Activated CD4-positive, alpha-beta T cell treated with anti-CD3 and anti-CD28 coated beads for 36 hours (primary cell): ENCODE measurements at regions of chr10 and their contacts with region 1.

Region 1: DNA sequence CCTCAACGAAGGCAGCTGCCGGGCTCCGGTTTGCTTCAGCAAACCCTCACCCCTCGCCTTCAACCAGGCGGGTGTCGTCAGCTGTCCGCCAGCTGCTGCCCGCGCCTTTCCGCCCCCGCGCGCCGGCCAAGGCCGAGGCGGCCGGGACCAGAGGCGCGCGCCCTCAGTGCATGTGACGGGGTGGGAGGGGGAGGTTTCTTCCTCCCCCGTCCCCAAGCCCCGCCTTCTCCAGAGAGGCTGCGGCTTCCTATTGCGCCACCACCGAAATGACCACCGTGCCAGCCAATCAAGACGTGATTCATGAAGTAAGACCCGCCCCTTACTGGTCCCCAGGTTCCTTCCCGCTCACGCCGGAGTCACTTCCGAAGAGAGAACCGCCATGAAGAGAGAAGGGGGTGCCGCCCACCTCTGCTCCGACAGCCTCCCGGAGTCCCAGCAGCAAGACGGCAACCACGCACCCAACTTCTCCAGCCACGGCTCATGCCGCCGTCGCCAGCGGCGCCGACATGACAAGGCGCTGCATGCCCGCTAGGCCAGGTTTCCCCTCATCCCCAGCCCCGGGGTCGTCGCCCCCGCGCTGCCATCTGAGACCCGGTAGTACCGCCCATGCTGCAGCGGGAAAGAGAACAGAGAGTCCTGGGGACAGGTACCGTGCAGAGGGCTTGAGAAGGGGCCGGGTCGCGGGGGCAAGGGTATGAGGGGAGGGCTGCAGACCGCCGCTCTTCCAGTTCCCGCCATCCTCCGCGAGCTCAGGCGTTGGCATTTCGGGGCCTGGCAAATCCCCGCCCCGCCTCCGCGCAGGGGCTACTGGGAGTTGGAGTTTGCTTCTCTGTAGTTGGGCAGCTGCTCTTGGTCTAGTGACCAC is at the start of gene SLF2:
- DNase-seq: peak; percentile 96
- ATAC-seq: peak; percentile 95
- H3K4me3 Mint-ChIP-seq: peak within 1 kb of the TSS; percentile 97
- H3K27ac Mint-ChIP-seq: peak within 1 kb of the TSS; percentile 98
- H3K4me1 Mint-ChIP-seq: peaks cover 45% of the 10 kb centered on the region
- H3K27me3 Mint-ChIP-seq: no peaks in the 10 kb centered on the region
- total RNA-seq, gene SLF2: 30.9 to 34.3 TPM

Region 2: GRCh38 chr10:99430451-99431189 is 1482.2 kb before region 1 on chr10 and contains the start of gene GOT1:
- CTCF ChIA-PET with region 1: no interaction called
- POLR2A ChIA-PET with region 1: no interaction called
- intact Hi-C with region 1: loop called in 1 of 2 experiments (anchors 2 kb)
- DNase-seq: peak; percentile 97
- ATAC-seq: peak; percentile 96
- H3K4me3 Mint-ChIP-seq: peak within 1 kb of the TSS; percentile 94
- H3K27ac Mint-ChIP-seq: peak within 1 kb of the TSS; percentile 98
- H3K4me1 Mint-ChIP-seq: peaks cover 32% of the 10 kb centered on the region
- H3K27me3 Mint-ChIP-seq: no peaks in the 10 kb centered on the region
- total RNA-seq, gene GOT1: 51.7 to 83.5 TPM

Region 3: DNA sequence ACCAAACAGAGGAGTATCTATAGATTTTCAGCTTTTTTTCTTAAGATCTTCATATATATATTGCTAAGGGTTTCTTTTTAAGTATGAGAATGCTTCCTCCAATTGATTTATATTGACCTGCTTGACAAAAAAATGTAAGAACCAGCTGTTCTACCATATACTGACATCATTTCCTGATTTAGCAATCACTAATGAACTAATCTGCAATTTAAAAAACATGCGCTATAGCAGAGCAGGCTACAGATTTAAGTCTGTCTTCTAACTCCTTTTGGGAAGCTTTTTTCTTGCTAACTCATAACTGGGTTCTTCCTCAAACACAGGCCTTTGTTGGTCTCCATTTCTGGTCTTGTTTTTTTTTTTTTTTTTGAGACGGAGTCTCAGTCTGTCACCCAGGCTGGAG is 1097.2 kb before region 1 on chr10:
- CTCF ChIA-PET with region 1: no interaction called
- POLR2A ChIA-PET with region 1: no interaction called
- intact Hi-C with region 1: no loop called
- DNase-seq: no peak
- ATAC-seq: no peak
- H3K4me3 Mint-ChIP-seq: no peak overlapping the region
- H3K27ac Mint-ChIP-seq: no peak overlapping the region
- H3K4me1 Mint-ChIP-seq: no peaks in the 10 kb centered on the region
- H3K27me3 Mint-ChIP-seq: no peaks in the 10 kb centered on the region

Region 4: DNA sequence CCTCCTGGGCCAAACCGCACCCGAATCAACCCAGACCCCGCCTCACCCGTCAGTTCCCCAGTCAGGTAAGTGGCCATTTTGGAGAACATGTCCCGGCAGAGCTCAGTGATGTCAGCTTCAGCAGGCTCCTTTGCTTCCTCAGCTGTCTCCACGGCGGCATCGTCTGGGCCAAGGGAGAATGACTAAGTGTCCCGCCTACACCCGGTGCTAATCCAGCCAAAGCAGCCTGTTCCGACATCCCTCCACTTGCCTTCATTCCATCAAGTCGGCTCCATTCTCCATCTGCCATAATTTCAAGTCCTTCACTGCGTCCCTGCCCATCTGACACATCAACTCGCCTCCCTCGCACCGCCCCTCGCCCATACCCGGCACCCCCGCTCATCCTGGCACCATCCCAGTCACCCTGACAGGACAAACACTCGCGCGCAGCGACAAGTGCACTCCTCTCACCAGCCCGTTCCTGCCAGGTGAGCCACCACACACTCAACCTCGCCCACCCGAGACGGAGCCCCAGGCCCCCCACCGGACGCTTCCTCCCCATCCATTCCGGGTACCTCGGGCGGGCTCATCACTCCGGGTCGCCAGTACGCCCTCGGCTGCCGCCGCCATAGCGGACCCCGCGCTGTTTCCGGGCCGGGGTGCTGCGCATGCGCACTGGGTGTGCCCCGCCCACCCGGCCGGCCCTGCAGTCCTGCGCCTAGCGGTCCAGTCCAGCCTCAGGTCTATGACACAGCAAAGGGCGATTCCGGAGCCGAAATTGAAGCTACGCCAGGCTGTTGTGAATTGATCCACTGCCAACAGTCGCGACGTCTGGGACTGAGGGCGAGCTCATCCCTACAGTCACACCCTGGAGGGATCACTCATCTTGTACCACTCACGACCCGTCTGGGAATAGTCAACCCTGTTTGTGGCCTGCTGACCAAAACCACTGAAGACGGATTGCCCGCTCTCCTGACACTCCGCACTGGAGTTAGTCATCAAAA is 626.5 kb before region 1 on chr10 and contains the start of gene BLOC1S2:
- CTCF ChIA-PET with region 1: no interaction called
- POLR2A ChIA-PET with region 1: no interaction called
- intact Hi-C with region 1: loop called in 1 of 2 experiments (anchors 1 kb)
- DNase-seq: peak; percentile 91
- ATAC-seq: peak; percentile 89
- H3K4me3 Mint-ChIP-seq: peak within 1 kb of the TSS; percentile 100
- H3K27ac Mint-ChIP-seq: peak within 1 kb of the TSS; percentile 100
- H3K4me1 Mint-ChIP-seq: peaks cover 24% of the 10 kb centered on the region
- H3K27me3 Mint-ChIP-seq: no peaks in the 10 kb centered on the region
- total RNA-seq, gene BLOC1S2: 45.0 to 45.7 TPM

Region 5: GRCh38 chr10:100836891-100837290 is 75.9 kb before region 1 on chr10:
- CTCF ChIA-PET with region 1: no interaction called
- POLR2A ChIA-PET with region 1: no interaction called
- intact Hi-C with region 1: no loop called
- DNase-seq: no peak
- ATAC-seq: no peak
- H3K4me3 Mint-ChIP-seq: no peak overlapping the region
- H3K27ac Mint-ChIP-seq: no peak overlapping the region
- H3K4me1 Mint-ChIP-seq: no peaks in the 10 kb centered on the region
- H3K27me3 Mint-ChIP-seq: peaks cover 29% of the 10 kb centered on the region

Region 6: GRCh38 chr10:100847440-100847839 is 65.4 kb before region 1 on chr10:
- CTCF ChIA-PET with region 1: interaction called, 3 read pairs
- POLR2A ChIA-PET with region 1: no interaction called
- intact Hi-C with region 1: loop called in 1 of 2 experiments (anchors 1 kb)
- DNase-seq: peak; percentile 90
- ATAC-seq: peak; percentile 94
- H3K4me3 Mint-ChIP-seq: no peak overlapping the region
- H3K27ac Mint-ChIP-seq: peak overlapping the region; percentile 85
- H3K4me1 Mint-ChIP-seq: peaks cover 31% of the 10 kb centered on the region
- H3K27me3 Mint-ChIP-seq: peaks cover 46% of the 10 kb centered on the region

Region 7: DNA sequence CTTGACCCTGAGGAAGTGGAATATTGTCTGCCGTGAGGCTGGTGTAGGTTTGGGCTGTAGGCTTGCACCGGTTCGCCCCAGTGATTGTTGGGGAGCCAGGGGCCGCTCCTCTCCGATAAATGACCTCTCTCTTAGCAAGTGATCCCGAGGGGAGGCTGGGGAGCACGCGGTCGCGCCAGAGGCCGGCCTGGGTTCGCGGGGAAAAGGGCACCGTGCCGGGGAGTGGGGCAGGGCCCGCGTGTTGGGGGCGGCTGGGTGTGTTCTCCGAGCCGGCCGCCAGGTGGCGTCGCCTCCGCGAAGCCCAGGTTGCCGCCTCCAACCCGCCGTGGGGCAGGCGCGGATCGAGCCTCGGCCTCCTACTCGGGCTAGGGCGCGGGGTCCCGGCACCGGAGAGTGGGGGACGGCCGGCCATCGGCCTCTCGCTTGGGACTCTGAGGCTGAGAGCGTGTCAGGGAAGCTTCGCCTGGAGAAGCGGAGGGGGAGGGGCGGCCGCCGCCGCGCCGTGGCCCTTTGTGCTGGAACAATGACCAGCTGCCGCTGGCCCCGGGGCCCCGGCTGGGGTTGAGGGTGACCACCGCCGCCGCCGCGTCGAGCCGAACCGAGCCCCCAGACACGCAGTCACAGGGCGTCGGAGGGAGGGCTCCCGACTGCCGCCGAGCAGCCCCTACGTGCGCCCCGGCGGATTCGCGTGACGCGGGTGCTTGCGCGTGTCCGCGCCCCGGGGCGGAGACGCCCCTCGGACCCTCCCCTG is 86.3 kb after region 1 on chr10:
- CTCF ChIA-PET with region 1: interaction called, 5 read pairs
- POLR2A ChIA-PET with region 1: interaction called, 4 read pairs
- intact Hi-C with region 1: loop called in 1 of 2 experiments (anchors 1 kb)
- DNase-seq: peak; percentile 87
- ATAC-seq: peak; percentile 59
- H3K4me3 Mint-ChIP-seq: peak overlapping the region; percentile 76
- H3K27ac Mint-ChIP-seq: peak overlapping the region; percentile 81
- H3K4me1 Mint-ChIP-seq: peaks cover 20% of the 10 kb centered on the region
- H3K27me3 Mint-ChIP-seq: no peaks in the 10 kb centered on the region

Region 8: DNA sequence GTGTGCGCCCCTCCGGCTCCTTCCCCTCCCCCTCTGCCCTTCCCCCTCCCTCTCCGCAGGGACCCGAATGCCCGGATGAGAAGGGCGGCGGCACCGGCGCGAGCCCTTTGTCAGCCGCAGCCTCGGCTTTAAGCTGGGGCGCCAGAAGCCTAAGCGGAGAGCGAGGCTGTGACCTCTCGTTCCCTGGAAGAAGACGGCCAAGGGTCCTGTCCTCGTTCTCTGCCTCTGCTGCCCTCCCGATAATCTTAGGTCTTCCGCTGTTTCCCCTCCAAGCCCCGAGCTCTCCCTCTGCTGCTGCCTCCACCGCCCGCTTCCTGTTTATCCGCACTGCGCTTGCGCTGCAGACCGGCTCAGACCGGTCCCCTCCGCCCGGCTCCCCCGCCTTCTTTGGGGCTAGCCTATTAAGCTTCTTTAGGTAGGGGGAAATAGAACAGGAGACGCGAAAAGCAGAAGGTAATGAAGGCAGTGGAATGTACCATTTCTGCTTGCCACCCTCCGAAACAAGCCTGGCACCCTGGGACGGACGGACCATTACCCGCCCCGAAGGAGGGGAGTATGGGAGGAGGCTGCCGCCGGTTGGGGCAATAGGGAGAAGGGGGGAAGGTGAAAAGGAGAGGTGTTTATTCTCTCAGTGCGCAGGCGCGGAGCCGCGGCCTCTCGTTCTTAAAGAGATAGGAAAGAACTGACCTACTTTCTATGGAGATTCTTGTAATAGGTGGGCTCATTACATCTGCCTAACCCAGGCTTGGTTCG is 905.5 kb after region 1 on chr10 and contains the start of gene OGA:
- CTCF ChIA-PET with region 1: no interaction called
- POLR2A ChIA-PET with region 1: no interaction called
- intact Hi-C with region 1: loop called in 1 of 2 experiments (anchors 5 kb)
- DNase-seq: peak; percentile 99
- ATAC-seq: peak; percentile 89
- H3K4me3 Mint-ChIP-seq: peak within 1 kb of the TSS; percentile 89
- H3K27ac Mint-ChIP-seq: peak within 1 kb of the TSS; percentile 83
- H3K4me1 Mint-ChIP-seq: peaks cover 40% of the 10 kb centered on the region
- H3K27me3 Mint-ChIP-seq: no peaks in the 10 kb centered on the region
- total RNA-seq, gene OGA: 113 to 124 TPM